ENCODE measurements at regions of chr5 and their contacts with region 1.

Region 1: GRCh38 chr5:94191604-94192003 is 426.8 kb downstream of the KIAA0825 start:
- DNase-seq: no peak

Region 2: DNA sequence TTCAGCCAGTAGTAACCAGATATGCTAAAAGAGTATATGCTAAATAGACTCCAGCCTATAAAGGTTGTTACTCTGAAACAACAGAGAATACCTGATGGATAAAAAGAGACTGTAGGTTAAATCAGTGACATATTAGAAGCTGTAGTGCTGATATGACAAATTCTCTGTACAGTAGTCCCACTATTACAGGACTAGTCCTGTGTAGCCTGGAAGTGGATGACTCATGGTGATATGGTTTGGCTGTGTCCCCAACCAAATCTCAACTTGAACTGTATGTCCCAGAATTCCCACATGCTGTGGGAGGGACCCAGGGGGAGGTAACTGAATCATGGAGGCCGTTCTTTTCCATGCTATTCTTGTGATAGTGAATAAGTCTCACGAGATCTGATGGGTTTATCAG is 174.0 kb before region 1 on chr5:
- CTCF ChIA-PET with region 1: no interaction called
- POLR2A ChIA-PET with region 1: no interaction called
- DNase-seq: no peak

Region 3: DNA sequence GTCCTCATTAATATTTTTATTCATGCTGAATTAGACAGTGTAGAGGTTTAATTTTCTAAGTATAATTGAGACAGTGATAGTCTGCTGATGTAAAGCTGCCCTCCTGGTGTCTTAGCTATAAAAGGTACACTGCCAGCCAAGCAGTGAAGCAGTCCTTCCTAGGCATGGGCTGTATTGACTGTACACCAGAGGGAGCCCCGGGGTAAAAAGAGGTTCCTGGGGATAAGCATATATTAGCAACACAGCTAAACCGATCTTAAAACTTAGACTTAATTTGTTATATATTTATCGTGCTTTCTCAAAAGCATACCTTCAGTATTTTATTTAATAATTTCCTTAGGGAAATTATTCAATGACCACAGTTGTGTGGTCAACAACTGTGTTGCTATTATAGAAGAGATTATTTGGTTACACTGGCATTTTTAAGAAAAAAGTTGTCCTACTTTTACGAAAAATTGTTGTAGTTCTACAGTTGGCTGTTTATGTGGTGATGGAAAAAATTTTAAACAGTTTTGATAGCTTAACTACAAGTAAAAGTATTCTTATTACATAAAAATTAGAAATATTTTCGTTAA is 1701.3 kb after region 1 on chr5:
- CTCF ChIA-PET with region 1: interaction called, 10 read pairs
- POLR2A ChIA-PET with region 1: no interaction called
- DNase-seq: peak; percentile 44